B cell (primary cell): ENCODE measurements at regions of chr6 and their contacts with region 1.

Region 1: GRCh38 chr6:25472306-25472705 is 179.7 kb upstream of the SCGN start:
- DNase-seq: no peak
- ATAC-seq: no peak
- H3K4me3 ChIP-seq: no peak overlapping the region
- H3K4me3 Mint-ChIP-seq: no peak overlapping the region
- H3K27ac ChIP-seq: no peak overlapping the region
- H3K27ac Mint-ChIP-seq: no peak overlapping the region
- H3K4me1 ChIP-seq: peaks cover 0 to 5% of the 10 kb centered on the region in 2 donors
- H3K4me1 Mint-ChIP-seq: peaks cover 12% of the 10 kb centered on the region
- H3K27me3 ChIP-seq: no peaks in the 10 kb centered on the region
- H3K27me3 Mint-ChIP-seq: no peaks in the 10 kb centered on the region
- CTCF ChIP-seq: no peak

Region 2: GRCh38 chr6:25301362-25301761 is 170.9 kb before region 1 on chr6:
- CTCF ChIA-PET with region 1: interaction called, 10 read pairs
- POLR2A ChIA-PET with region 1: no interaction called
- intact Hi-C with region 1: no loop called
- DNase-seq: peak; percentile 63
- ATAC-seq: peak; percentile 86
- H3K4me3 ChIP-seq: peak overlapping the region in 1 of 5 experiments; percentile 31
- H3K4me3 Mint-ChIP-seq: peak overlapping the region; percentile 1
- H3K27ac ChIP-seq: peak overlapping the region; percentile 50 to 51
- H3K27ac Mint-ChIP-seq: peak overlapping the region; percentile 78
- H3K4me1 ChIP-seq: peaks cover 51 to 53% of the 10 kb centered on the region in 2 donors
- H3K4me1 Mint-ChIP-seq: peaks cover 63% of the 10 kb centered on the region
- H3K27me3 ChIP-seq: no peaks in the 10 kb centered on the region
- H3K27me3 Mint-ChIP-seq: no peaks in the 10 kb centered on the region
- CTCF ChIP-seq: no peak

Region 3: DNA sequence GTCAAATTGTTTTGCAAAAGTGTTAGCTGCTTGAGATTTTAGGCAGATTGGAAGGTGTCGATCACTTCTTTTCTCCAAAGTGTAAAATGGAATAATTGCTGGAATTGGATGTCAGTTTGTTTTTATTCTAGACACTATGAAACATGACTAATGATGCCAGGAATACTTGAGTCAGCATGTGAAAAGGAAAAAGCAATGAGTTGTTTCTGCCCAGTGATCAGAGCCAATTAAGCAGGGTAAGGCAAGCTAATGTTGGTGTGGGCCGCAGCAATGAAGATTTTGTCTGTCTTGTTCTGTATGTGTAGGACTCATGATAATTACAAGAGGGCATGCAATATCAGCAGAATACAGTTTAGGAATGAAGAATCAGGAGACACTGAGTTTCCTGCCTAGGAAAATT is 82.8 kb before region 1 on chr6:
- CTCF ChIA-PET with region 1: no interaction called
- POLR2A ChIA-PET with region 1: no interaction called
- intact Hi-C with region 1: loop called (anchors 10 kb)
- DNase-seq: no peak
- ATAC-seq: no peak
- H3K4me3 ChIP-seq: no peak overlapping the region
- H3K4me3 Mint-ChIP-seq: no peak overlapping the region
- H3K27ac ChIP-seq: no peak overlapping the region
- H3K27ac Mint-ChIP-seq: no peak overlapping the region
- H3K4me1 ChIP-seq: peaks cover 23 to 24% of the 10 kb centered on the region in 2 donors
- H3K4me1 Mint-ChIP-seq: peaks cover 23% of the 10 kb centered on the region
- H3K27me3 ChIP-seq: no peaks in the 10 kb centered on the region
- H3K27me3 Mint-ChIP-seq: peaks cover 4% of the 10 kb centered on the region
- CTCF ChIP-seq: no peak